ENCODE measurements at regions of chr1 and their contacts with region 1.

Region 1: GRCh38 chr1:7667625-7668218 is 103.4 kb upstream of the VAMP3 start:
- DNase-seq: peak; percentile 85
- ATAC-seq: peak; percentile 72
- H3K4me3 Mint-ChIP-seq: no peak overlapping the region
- H3K27ac Mint-ChIP-seq: no peak overlapping the region
- H3K4me1 Mint-ChIP-seq: peaks cover 4% of the 10 kb centered on the region
- H3K27me3 Mint-ChIP-seq: no peaks in the 10 kb centered on the region

Region 2: DNA sequence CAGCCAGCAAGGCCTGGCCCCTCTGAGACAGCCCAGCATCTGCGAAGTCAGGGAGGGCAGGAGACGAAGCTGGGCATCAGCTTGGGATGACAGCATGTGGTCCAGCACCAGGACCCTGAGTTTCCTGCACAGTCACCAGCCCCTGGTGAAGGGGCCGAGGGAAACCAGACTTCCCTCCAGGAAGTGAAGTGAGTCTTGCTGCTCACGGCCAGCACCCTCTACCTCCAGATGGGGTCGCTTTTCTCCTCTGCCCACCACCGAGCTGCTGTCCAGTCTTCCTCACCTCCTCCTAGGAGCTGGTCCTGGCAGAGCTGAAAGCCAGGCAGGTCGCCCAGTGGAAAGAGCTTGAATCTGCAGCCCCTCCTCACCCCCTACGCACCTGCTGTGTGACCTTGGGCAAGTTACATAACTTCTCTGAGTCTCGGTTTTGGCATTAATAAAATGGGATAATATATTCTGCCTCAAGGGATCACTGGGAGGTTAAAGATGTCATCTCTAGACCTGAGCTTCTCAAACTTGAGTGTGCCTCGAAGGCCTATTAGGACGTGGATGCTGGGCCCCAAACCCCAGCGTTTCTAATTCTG is 15.1 kb before region 1 on chr1:
- CTCF ChIA-PET with region 1: interaction called, 16 read pairs
- DNase-seq: no peak
- ATAC-seq: no peak
- H3K4me3 Mint-ChIP-seq: no peak overlapping the region
- H3K27ac Mint-ChIP-seq: no peak overlapping the region
- H3K4me1 Mint-ChIP-seq: no peaks in the 10 kb centered on the region
- H3K27me3 Mint-ChIP-seq: no peaks in the 10 kb centered on the region

Region 3: GRCh38 chr1:7704214-7705047 is 36.7 kb after region 1 on chr1:
- CTCF ChIA-PET with region 1: interaction called, 10 read pairs
- DNase-seq: peak; percentile 92
- ATAC-seq: peak; percentile 98
- H3K4me3 Mint-ChIP-seq: peak overlapping the region; percentile 68
- H3K27ac Mint-ChIP-seq: no peak overlapping the region
- H3K4me1 Mint-ChIP-seq: peaks cover 12% of the 10 kb centered on the region
- H3K27me3 Mint-ChIP-seq: peaks cover 73% of the 10 kb centered on the region

Region 4: GRCh38 chr1:7752512-7753417 is 85.0 kb after region 1 on chr1:
- CTCF ChIA-PET with region 1: interaction called, 426 read pairs
- DNase-seq: peak; percentile 58
- ATAC-seq: peak; percentile 61
- H3K4me3 Mint-ChIP-seq: peak overlapping the region; percentile 38
- H3K27ac Mint-ChIP-seq: peak overlapping the region; percentile 16
- H3K4me1 Mint-ChIP-seq: peaks cover 42% of the 10 kb centered on the region
- H3K27me3 Mint-ChIP-seq: peaks cover 6% of the 10 kb centered on the region

Region 5: GRCh38 chr1:7770997-7771822 is 103.5 kb after region 1 on chr1 and contains the start of gene VAMP3:
- CTCF ChIA-PET with region 1: interaction called, 18 read pairs
- DNase-seq: peak; percentile 90
- ATAC-seq: peak; percentile 94
- H3K4me3 Mint-ChIP-seq: peak within 1 kb of the TSS; percentile 83
- H3K27ac Mint-ChIP-seq: peak within 1 kb of the TSS; percentile 83
- H3K4me1 Mint-ChIP-seq: peaks cover 35% of the 10 kb centered on the region
- H3K27me3 Mint-ChIP-seq: peaks cover 32% of the 10 kb centered on the region
- total RNA-seq, gene VAMP3: 25.7 to 33.1 TPM

Measured in activated CD8-positive, alpha-beta memory T cell treated with anti-CD3 and anti-CD28 coated beads, Interleukin-2, amount 10 ng/mL, durations not matched to agents 7 days and 5 days (primary cell).